Endothelial cell of umbilical vein (primary cell): ENCODE measurements at regions of chr9 and their contacts with region 1.

Region 1: GRCh38 chr9:128702445-128702948 is at the start of gene PKN3:
- DNase-seq: peak; percentile 83
- H3K4me3 ChIP-seq: peak within 1 kb of the TSS; percentile 68 to 80 (median 71)
- H3K27ac ChIP-seq: peak within 1 kb of the TSS; percentile 38
- H3K4me1 ChIP-seq: peaks cover 14% of the 10 kb centered on the region
- H3K27me3 ChIP-seq: no peaks in the 10 kb centered on the region
- CTCF ChIP-seq: peak; percentile 95 to 97
- POLR2A ChIP-seq: peak; percentile 69
- total RNA-seq, gene PKN3: 39.3 and 40.4 TPM in 2 replicates

Region 2: GRCh38 chr9:128635283-128636023 is 67.0 kb before region 1 on chr9:
- CTCF ChIA-PET with region 1: interaction called, 18 read pairs
- POLR2A ChIA-PET with region 1: no interaction called
- dilution Hi-C with region 1: no loop called
- intact Hi-C with region 1: loop called (anchors 1 kb)
- DNase-seq: peak; percentile 86
- H3K4me3 ChIP-seq: no peak overlapping the region
- H3K27ac ChIP-seq: peak overlapping the region; percentile 64
- H3K4me1 ChIP-seq: peaks cover 11% of the 10 kb centered on the region
- H3K27me3 ChIP-seq: no peaks in the 10 kb centered on the region
- CTCF ChIP-seq: peak; percentile 83 to 86
- POLR2A ChIP-seq: peak; percentile 61

Region 3: GRCh38 chr9:128723866-128724743 is 21.6 kb after region 1 on chr9 and contains the start of gene ZDHHC12:
- CTCF ChIA-PET with region 1: interaction called, 12 read pairs
- POLR2A ChIA-PET with region 1: no interaction called
- dilution Hi-C with region 1: no loop called
- intact Hi-C with region 1: loop called (anchors 1 kb)
- DNase-seq: peak; percentile 95
- H3K4me3 ChIP-seq: peak within 1 kb of the TSS; percentile 53 to 69 (median 58)
- H3K27ac ChIP-seq: no peak within 1 kb of the TSS
- H3K4me1 ChIP-seq: peaks cover 5% of the 10 kb centered on the region
- H3K27me3 ChIP-seq: no peaks in the 10 kb centered on the region
- CTCF ChIP-seq: no peak
- POLR2A ChIP-seq: peak; percentile 94
- total RNA-seq, gene ZDHHC12: 28.8 and 31.1 TPM in 2 replicates